Endothelial cell of umbilical vein (primary cell): ENCODE measurements at regions of chr2 and their contacts with region 1.

Region 1: GRCh38 chr2:100902833-100903405 is 83.0 kb downstream of the NPAS2 start:
- DNase-seq: peak; percentile 94
- H3K4me3 ChIP-seq: no peak overlapping the region
- H3K27ac ChIP-seq: peak overlapping the region; percentile 79
- H3K4me1 ChIP-seq: peaks cover 62% of the 10 kb centered on the region
- H3K27me3 ChIP-seq: no peaks in the 10 kb centered on the region
- CTCF ChIP-seq: peak in 1 of 2 donors; percentile 24
- POLR2A ChIP-seq: peak; percentile 78

Region 2: GRCh38 chr2:100554798-100555407 is 348.0 kb before region 1 on chr2:
- CTCF ChIA-PET with region 1: no interaction called
- POLR2A ChIA-PET with region 1: no interaction called
- dilution Hi-C with region 1: no loop called
- intact Hi-C with region 1: no loop called
- DNase-seq: no peak
- H3K4me3 ChIP-seq: no peak overlapping the region
- H3K27ac ChIP-seq: no peak overlapping the region
- H3K4me1 ChIP-seq: no peaks in the 10 kb centered on the region
- H3K27me3 ChIP-seq: no peaks in the 10 kb centered on the region
- CTCF ChIP-seq: no peak
- POLR2A ChIP-seq: no peak

Region 3: DNA sequence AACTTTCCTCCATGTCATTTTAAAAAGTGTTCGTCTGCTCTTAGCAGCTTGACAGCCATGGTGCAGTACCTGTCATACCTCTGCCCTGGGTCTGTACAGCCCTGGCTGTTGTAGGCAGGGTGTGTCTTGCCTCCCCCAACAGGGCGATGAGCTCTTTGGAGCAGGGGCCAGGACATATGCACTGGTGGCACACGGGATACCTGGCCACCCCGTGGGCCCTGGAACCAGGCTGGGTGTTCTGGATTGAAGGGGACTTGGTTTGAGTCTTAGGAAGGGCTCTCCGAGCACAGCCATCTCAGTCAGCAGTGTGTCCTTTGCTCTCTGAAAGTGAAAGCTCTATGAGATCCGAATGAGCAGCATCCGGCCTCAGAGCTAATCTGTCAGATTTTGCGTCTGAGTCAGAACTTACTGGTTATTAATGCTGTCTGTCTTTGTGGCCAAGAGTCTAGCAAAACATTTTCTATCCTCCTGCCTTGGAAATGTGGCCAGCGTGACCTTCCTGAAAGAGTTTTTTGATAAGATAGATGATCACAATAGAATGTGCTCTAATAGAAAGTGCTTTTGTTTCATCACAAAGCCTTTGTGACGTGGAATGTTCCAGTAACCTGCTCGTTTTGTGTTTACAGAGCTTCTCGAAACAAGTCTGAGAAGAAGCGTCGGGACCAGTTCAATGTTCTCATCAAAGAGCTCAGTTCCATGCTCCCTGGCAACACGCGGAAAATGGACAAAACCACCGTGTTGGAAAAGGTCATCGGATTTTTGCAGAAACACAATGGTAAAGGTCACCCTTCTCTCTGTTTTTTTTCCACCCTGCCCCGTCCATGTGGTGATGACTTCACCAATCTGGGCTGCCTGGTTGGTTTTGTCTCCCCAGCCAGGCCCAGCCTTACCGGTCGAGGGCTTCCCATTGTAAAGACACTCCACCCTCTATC is 21.9 kb after region 1 on chr2:
- CTCF ChIA-PET with region 1: interaction called, 28 read pairs
- POLR2A ChIA-PET with region 1: interaction called, 10 read pairs
- dilution Hi-C with region 1: no loop called
- intact Hi-C with region 1: loop called (anchors 1 kb)
- DNase-seq: peak; percentile 99
- H3K4me3 ChIP-seq: peak overlapping the region in 2 of 3 experiments; percentile 11 to 29
- H3K27ac ChIP-seq: peak overlapping the region; percentile 96
- H3K4me1 ChIP-seq: peaks cover 28% of the 10 kb centered on the region
- H3K27me3 ChIP-seq: no peaks in the 10 kb centered on the region
- CTCF ChIP-seq: no peak
- POLR2A ChIP-seq: peak; percentile 7

Region 4: GRCh38 chr2:100957996-100958653 is 55.2 kb after region 1 on chr2:
- CTCF ChIA-PET with region 1: no interaction called
- POLR2A ChIA-PET with region 1: no interaction called
- dilution Hi-C with region 1: no loop called
- intact Hi-C with region 1: loop called (anchors 2 kb)
- DNase-seq: no peak
- H3K4me3 ChIP-seq: no peak overlapping the region
- H3K27ac ChIP-seq: no peak overlapping the region
- H3K4me1 ChIP-seq: peaks cover 15% of the 10 kb centered on the region
- H3K27me3 ChIP-seq: no peaks in the 10 kb centered on the region
- CTCF ChIP-seq: no peak
- POLR2A ChIP-seq: no peak

Region 5: DNA sequence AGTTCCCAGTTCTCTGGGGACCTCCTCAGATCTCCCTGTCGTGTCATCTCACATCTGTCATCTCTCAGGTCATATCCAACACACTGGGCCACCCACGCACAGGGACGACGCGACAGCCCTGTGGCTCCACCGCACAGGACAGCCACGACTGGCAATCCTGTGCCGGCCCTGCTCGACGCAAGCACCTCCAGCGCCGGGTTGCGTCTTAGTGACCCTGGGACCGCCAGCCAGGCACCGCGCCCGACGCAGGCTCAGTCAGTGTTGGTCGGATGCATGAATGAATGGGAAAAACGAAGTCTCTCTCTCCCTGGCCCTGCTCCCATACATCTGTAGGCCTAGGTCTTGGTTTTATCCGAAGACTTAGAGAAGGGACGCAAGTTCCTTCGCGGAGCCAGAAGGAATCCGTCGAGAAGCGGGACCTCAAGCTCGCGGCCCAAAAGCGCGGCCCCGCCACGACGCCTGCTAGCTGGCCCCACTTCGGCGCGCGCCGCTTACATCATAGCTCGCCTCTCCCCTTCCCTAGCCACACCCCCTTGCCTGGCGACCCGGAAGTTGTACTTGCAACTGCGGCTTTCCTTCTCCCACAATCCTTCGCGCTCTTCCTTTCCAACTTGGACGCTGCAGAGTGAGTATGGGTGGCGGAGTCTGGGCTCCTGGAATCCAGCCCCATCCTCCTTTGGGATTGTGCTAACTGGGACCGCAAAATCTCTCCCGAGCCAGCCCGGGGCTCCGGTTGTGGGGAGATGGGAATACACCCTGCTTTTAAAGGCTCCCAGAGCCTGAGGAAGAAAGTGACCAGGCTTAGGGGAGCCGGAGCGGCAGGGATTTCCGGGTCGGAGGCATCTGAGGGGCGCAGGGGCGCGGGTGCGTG is 99.0 kb after region 1 on chr2 and contains the start of gene RPL31:
- CTCF ChIA-PET with region 1: no interaction called
- POLR2A ChIA-PET with region 1: no interaction called
- dilution Hi-C with region 1: no loop called
- intact Hi-C with region 1: no loop called
- DNase-seq: peak; percentile 95
- H3K4me3 ChIP-seq: peak within 1 kb of the TSS; percentile 82 to 94 (median 90)
- H3K27ac ChIP-seq: peak within 1 kb of the TSS; percentile 76
- H3K4me1 ChIP-seq: peaks cover 24% of the 10 kb centered on the region
- H3K27me3 ChIP-seq: no peaks in the 10 kb centered on the region
- CTCF ChIP-seq: no peak
- POLR2A ChIP-seq: peak; percentile 99
- total RNA-seq, gene RPL31: 1,337 and 1,355 TPM in 2 replicates